HEK293 (cell line): ENCODE measurements at regions of chr19 and their contacts with region 1.

Region 1: DNA sequence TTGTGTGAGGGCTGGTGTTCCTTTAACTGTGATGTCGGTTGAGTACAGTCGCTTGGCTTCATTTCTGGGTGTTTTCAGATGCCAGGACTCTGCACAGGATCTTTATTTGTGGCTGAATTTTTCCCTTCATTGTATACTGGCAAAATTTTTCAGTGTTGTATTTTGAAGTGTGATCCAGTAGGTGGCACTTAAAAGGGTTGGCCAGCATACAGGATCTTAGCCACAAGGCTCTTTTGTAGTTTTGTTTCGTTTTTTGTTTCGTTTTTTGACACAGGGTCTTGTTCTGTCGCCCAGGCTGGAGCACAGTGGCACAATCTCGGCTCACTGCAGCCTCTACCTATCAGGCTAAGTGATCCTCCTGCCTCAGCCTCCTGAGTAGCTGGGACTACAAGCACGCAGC is 8.7 kb downstream of the FCAR start:
- H3K4me3 ChIP-seq: no peak overlapping the region
- H3K27ac ChIP-seq: no peak overlapping the region
- H3K4me1 ChIP-seq: no peaks in the 10 kb centered on the region
- CTCF ChIP-seq: 0 out of 2 replicates have a peak, but pooled peaks have one; percentile 8

Region 2: DNA sequence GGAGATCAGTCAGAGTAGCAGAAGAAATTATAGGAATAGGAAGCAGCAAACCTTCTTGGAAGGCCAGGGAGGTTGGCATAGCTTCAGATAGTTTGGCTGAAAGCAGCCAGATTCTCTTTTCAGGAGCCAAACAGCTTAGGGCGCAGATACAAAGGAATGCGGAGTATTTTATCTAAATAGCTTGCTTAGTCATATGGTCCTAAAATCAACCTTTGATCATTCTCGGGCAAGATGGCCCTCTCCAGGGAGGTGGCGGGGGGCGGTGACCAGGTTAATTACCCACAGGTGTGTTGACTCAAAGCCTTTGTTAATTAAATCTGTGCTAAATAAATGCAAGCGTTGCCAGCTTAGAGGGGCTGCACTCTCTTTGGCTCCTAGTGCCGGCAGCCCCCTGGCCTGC is 10.6 kb after region 1 on chr19:
- CTCF ChIA-PET with region 1: interaction called, 18 read pairs
- POLR2A ChIA-PET with region 1: no interaction called
- H3K4me3 ChIP-seq: no peak overlapping the region
- H3K27ac ChIP-seq: no peak overlapping the region
- H3K4me1 ChIP-seq: no peaks in the 10 kb centered on the region
- CTCF ChIP-seq: no peak

Region 3: DNA sequence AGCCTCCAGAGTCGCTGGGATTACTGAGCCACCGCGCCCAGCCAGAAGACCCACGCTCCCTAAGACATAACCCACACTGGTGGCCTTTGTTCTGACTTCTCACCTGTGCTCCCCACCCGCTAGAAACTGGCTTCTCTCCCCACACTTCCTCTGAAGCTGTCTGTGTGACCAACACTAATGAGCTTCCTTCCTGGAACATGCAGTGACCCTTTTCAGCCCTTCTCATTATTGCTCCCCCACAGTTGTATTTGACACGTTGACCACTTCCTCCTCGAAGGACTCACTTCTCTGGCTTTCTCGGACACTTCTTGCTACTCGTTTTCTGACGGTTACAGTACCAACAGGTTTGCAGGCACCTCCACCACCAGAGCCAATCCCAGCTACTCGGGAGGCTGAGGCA is 34.1 kb after region 1 on chr19:
- CTCF ChIA-PET with region 1: interaction called, 16 read pairs
- POLR2A ChIA-PET with region 1: interaction called, 3 read pairs
- H3K4me3 ChIP-seq: no peak overlapping the region
- H3K27ac ChIP-seq: no peak overlapping the region
- H3K4me1 ChIP-seq: no peaks in the 10 kb centered on the region
- CTCF ChIP-seq: no peak